HEK293 (cell line): ENCODE measurements at regions of chr7 and their contacts with region 1.

Region 1: DNA sequence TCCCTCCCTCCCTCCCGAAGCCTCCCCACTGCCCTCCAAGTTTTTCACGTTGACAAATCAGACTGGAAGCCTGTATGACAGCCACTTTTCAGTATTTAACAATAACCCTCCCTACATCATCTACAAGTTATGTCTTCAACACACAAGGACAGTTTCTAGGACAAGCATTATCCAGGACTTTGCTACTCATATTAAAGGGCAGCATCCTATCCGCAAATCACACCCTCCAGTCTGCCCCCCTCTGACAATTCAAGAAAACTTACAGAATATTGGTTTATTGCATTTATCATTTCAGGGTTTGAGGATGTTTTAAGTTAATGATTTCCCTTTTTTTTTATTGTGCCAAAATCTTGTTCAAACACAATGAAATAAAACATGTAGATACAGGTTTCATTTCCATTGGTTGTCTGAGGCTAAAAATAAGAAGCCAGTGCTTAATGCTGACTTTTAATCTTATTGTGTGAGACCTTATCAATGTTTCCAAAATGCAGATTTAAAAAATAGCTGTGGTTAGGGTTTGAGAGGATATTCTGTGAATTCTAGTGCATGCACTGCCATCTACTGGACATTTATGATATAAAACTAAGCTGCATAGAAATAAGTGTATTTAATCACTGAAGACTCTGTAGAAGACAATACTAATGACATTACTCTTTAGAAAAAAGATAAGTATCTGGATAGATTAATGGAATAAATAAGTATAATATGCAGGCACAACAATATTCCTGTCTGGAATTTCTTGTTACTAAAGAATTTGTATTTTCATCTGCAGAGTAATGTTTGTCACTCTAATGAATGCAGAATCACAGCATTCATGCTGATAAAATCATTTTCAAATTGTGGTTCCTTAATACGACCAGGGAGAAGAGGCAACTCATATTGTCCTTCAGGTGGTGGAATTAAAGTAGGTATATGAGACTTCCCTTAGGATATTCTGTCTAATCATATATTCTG is 64.1 kb downstream of the CAV1 start:
- H3K4me3 ChIP-seq: no peak overlapping the region
- H3K27ac ChIP-seq: no peak overlapping the region
- H3K4me1 ChIP-seq: peaks cover 10% of the 10 kb centered on the region
- CTCF ChIP-seq: peak; percentile 30; the same call in 1 of the 2 replicates

Region 2: GRCh38 chr7:116173051-116174028 is 415.6 kb before region 1 on chr7:
- CTCF ChIA-PET with region 1: interaction called, 31 read pairs
- POLR2A ChIA-PET with region 1: no interaction called
- H3K4me3 ChIP-seq: no peak overlapping the region
- H3K27ac ChIP-seq: no peak overlapping the region
- H3K4me1 ChIP-seq: no peaks in the 10 kb centered on the region
- CTCF ChIP-seq: peak; percentile 52; the same call in 1 of the 2 replicates

Region 3: DNA sequence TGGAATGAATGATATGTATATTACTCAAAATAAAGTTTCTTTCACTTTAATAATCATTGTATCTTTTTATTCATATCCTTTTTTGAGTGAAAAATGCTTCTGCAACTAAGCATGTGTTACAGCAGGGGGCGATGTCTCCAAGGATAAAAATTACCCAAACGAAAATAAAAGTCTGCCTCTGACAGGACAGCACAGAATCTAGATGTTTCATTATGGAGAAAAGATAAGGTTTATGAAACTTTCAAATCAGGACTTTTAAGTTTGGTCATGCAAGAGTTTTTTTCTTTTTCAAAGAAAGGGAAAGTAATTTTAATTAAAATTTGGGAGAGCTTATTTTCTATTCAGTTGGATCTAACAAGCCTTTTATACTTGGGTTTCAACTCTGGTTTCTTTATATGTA is 330.2 kb before region 1 on chr7:
- CTCF ChIA-PET with region 1: interaction called, 48 read pairs
- POLR2A ChIA-PET with region 1: interaction called, 3 read pairs
- H3K4me3 ChIP-seq: no peak overlapping the region
- H3K27ac ChIP-seq: no peak overlapping the region
- H3K4me1 ChIP-seq: no peaks in the 10 kb centered on the region
- CTCF ChIP-seq: 0 out of 2 replicates have a peak, but pooled peaks have one; percentile 44

Region 4: GRCh38 chr7:116601426-116601825 is 12.5 kb after region 1 on chr7:
- CTCF ChIA-PET with region 1: interaction called, 22 read pairs
- POLR2A ChIA-PET with region 1: no interaction called
- H3K4me3 ChIP-seq: no peak overlapping the region
- H3K27ac ChIP-seq: no peak overlapping the region
- H3K4me1 ChIP-seq: peaks cover 6% of the 10 kb centered on the region; the same call in 1 of the 2 replicates
- CTCF ChIP-seq: no peak

Region 5: GRCh38 chr7:116786791-116787443 is 198.0 kb after region 1 on chr7:
- CTCF ChIA-PET with region 1: interaction called, 30 read pairs
- POLR2A ChIA-PET with region 1: no interaction called
- H3K4me3 ChIP-seq: no peak overlapping the region
- H3K27ac ChIP-seq: no peak overlapping the region
- H3K4me1 ChIP-seq: peaks cover 5% of the 10 kb centered on the region; the same call in 1 of the 2 replicates
- CTCF ChIP-seq: peak; percentile 35; the same call in 1 of the 2 replicates